ENCODE measurements at regions of chr2 and their contacts with region 1.

Region 1: GRCh38 chr2:105576440-105577252 is 168.1 kb upstream of the NCK2 start:
- DNase-seq: no peak
- H3K4me3 ChIP-seq: no peak overlapping the region
- H3K27ac ChIP-seq: peak overlapping the region; percentile 17 to 33
- H3K4me1 ChIP-seq: peaks cover 0 to 17% (median 2%) of the 10 kb centered on the region in 4 donors
- H3K27me3 ChIP-seq: no peaks in the 10 kb centered on the region
- CTCF ChIP-seq: peak; percentile 67 to 70

Region 2: DNA sequence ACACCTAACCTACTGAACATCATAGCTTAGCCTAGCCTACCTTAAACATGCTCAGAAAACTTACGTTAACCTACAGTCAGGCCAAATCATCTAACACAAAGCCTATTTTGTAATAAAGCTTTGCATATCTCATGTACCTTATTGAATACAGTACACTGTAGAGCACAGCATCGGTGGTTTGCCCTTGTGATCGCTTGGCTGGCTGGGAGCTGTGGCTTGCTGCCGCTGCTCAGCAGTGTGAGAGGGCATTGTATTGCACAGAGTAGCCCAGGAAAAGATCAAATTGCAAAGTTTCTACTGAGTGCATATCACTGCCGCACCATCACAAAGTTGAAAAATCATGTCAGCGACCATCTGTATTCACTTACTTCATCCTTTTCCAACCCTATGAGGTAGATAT is 105.8 kb after region 1 on chr2:
- intact Hi-C with region 1: loop called (anchors 10 kb)
- DNase-seq: no peak
- H3K4me3 ChIP-seq: no peak overlapping the region
- H3K27ac ChIP-seq: no peak overlapping the region
- H3K4me1 ChIP-seq: no peaks in the 10 kb centered on the region
- H3K27me3 ChIP-seq: peaks cover 0 to 8% of the 10 kb centered on the region in 2 donors
- CTCF ChIP-seq: no peak

Region 3: DNA sequence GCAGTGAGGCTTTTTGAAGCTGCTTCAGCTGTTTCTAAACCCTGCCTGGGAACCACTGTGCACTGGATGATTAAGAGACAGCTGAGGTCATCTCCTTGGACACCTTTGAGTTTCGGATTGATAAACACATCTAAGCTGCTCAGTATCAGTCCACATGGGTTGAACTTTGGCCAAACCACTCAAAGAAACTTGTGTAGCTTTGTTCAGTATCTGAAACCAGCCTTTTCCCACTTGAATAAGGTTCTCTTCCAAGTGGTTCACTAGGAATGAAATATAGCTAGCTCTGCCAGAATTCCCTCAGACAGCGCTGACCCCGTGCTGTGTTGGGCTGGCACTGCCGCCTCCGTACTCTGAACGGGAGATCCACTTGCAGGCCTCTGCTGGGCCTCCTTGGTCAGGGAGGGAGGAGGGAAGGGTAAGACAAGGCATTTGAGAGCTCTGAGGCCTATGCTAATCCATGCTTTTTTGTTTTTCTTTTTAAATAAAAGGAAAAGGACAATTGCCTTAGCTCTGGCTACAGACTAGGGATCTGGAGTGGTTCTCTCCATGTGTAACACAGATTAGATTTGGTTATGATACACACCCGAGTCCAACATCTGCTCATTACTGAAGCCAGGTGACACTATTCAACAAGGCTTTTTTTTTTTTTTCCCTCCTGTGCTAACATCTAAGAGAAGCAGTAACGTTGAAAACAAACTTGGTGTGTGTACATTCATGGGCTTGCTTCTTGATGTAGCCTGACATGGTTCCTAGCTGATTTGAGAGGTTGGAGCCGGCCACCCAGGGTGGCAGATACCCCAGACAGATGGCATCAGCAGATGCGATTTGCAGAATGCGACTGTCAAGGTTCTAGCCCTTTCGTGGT is 235.8 kb after region 1 on chr2:
- intact Hi-C with region 1: loop called (anchors 5 kb)
- DNase-seq: peak; percentile 43 to 87
- H3K4me3 ChIP-seq: no peak overlapping the region
- H3K27ac ChIP-seq: peak overlapping the region; percentile 34 to 48
- H3K4me1 ChIP-seq: peaks cover 0 to 60% (median 43%) of the 10 kb centered on the region in 4 donors
- H3K27me3 ChIP-seq: no peaks in the 10 kb centered on the region
- CTCF ChIP-seq: no peak

Region 4: DNA sequence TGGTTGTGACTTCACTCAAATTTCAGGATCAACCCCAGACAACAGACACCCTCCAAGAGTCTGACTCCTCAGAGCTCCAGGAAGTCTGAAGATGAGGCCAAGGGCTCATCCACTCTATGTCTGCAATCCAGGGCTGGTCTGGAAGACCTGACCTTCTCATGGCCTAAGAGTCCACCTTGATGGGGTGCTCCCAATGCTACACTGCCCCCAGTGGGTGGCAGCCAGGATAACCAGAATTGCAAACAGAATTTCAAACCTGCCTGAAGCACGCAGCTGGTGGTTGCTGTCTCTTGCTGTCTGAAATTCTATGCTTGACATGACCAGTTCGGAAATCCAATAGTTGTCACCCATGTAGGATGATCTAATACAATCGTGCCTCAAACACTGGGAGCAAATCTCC is 521.4 kb after region 1 on chr2:
- intact Hi-C with region 1: loop called (anchors 10 kb)
- DNase-seq: no peak
- H3K4me3 ChIP-seq: no peak overlapping the region
- H3K27ac ChIP-seq: no peak overlapping the region
- H3K4me1 ChIP-seq: no peaks in the 10 kb centered on the region
- H3K27me3 ChIP-seq: no peaks in the 10 kb centered on the region
- CTCF ChIP-seq: peak in 1 of 2 experiments; percentile 8

Measured in tibial artery (tissue), 4 donors.